ENCODE measurements at regions of chr5 and their contacts with region 1.

Region 1: GRCh38 chr5:132410451-132411381 is 41.2 kb downstream of the SLC22A5 start:
- DNase-seq: peak; percentile 88 to 91 (median 90)
- ATAC-seq: peak; percentile 99
- H3K4me3 ChIP-seq: peak overlapping the region; percentile 60
- H3K27ac ChIP-seq: peak overlapping the region; percentile 81
- H3K4me1 ChIP-seq: peaks cover 17% of the 10 kb centered on the region in 2 experiments; a peak in 4 of 5 replicates
- H3K27me3 ChIP-seq: no peaks in the 10 kb centered on the region
- CTCF ChIP-seq: peak; percentile 81 to 93 (median 85)
- EP300 ChIP-seq: peak; percentile 12; the same call in 1 of the 2 replicates
- POLR2A ChIP-seq: peak; percentile 72
- RAD21 ChIP-seq: peak; percentile 83 to 88

Region 2: DNA sequence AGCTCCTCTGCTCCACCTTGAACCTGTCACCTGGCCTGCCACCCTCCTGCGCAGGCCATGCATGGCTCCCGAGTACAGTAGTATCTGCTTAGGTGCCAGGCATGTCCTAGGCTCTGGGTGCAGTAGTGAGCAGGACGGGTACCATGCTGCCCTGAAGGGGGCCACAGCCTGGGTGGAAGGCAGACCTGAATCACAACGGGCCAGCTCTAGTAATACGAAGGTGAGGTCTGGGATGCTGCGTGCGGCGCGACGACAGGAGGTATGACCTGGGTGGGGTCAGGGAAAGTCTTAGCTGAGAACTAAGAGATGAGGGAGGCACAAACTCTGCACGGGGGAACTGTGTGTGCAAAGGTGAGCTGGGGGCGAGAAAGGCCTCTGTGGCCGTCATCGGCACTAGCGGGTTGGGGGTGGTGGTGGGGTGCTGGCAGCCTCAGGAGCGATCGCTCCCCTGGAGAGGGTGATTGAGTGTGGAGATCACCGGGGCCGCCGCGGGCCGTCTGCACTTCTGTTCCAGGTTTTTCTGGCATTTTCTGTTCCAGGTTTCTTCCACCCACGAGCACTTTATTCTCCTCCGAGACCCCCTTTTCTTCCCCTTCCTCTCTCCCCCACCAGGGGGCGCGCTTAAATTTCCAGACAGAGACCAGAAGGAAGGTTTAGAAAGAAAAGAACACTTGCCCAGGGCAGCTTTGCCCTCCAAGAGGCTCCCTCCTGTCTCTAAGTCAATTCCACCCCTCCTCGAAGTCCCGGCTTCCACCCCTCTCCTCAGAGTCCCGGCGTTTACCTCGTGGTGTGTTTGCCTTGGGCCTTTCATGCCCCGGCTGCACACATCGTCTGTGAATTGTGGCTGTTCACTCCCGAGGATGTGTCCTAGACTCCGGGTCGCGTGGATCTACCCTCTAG is 138.2 kb before region 1 on chr5:
- CTCF ChIA-PET with region 1: no interaction called
- POLR2A ChIA-PET with region 1: no interaction called
- in situ Hi-C with region 1: no loop called
- intact Hi-C with region 1: loop called (anchors 1 kb)
- DNase-seq: peak; percentile 59 to 85 (median 65)
- ATAC-seq: peak; percentile 82
- H3K4me3 ChIP-seq: no peak overlapping the region
- H3K27ac ChIP-seq: no peak overlapping the region
- H3K4me1 ChIP-seq: peaks cover 12 to 41% of the 10 kb centered on the region in 2 experiments; a peak in 4 of 5 replicates
- H3K27me3 ChIP-seq: no peaks in the 10 kb centered on the region
- CTCF ChIP-seq: peak; percentile 82 to 89 (median 84)
- EP300 ChIP-seq: no peak
- POLR2A ChIP-seq: no peak
- RAD21 ChIP-seq: peak; percentile 62 to 89

Region 3: DNA sequence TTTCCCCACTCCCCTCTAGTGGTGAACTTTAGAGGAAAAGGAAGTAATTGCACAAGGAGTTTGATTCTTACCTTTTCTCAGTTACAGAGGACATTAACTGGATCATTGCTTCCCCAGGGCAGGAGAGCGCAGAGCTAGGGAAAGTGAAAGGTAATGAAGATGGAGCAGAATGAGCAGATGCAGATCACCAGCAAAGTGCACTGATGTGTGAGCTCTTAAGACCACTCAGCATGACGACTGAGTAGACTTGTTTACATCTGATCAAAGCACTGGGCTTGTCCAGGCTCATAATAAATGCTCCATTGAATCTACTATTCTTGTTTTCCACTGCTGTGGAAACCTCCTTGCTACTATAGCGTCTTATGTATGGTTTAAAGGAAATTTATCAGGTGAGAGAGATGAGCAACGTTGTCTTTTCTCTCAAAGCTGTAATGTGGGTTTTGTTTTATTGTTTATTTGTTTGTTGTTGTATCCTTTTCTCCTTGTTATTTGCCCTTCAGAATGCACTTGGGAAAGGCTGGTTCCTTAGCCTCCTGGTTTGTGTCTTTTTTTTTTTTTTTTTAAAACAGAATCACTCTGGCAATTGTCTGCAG is 16.0 kb before region 1 on chr5:
- CTCF ChIA-PET with region 1: no interaction called
- POLR2A ChIA-PET with region 1: interaction called, 11 read pairs
- in situ Hi-C with region 1: no loop called
- intact Hi-C with region 1: no loop called
- DNase-seq: no peak
- ATAC-seq: no peak
- H3K4me3 ChIP-seq: no peak overlapping the region
- H3K27ac ChIP-seq: no peak overlapping the region
- H3K4me1 ChIP-seq: no peaks in the 10 kb centered on the region; a peak in 1 of 5 replicates
- H3K27me3 ChIP-seq: no peaks in the 10 kb centered on the region
- CTCF ChIP-seq: no peak
- EP300 ChIP-seq: no peak
- POLR2A ChIP-seq: no peak
- RAD21 ChIP-seq: no peak

Region 4: GRCh38 chr5:133316427-133316826 is 905.7 kb after region 1 on chr5:
- CTCF ChIA-PET with region 1: no interaction called
- POLR2A ChIA-PET with region 1: no interaction called
- in situ Hi-C with region 1: no loop called
- intact Hi-C with region 1: no loop called
- DNase-seq: peak in 3 of 4 experiments; percentile 11 to 51 (median 30)
- ATAC-seq: peak; percentile 86
- H3K4me3 ChIP-seq: no peak overlapping the region
- H3K27ac ChIP-seq: no peak overlapping the region
- H3K4me1 ChIP-seq: no peaks in the 10 kb centered on the region
- H3K27me3 ChIP-seq: peaks cover 3 to 43% of the 10 kb centered on the region in 2 experiments; a peak in 4 of 5 replicates
- CTCF ChIP-seq: peak; percentile 69 to 86 (median 83)
- EP300 ChIP-seq: no peak
- POLR2A ChIP-seq: no peak
- RAD21 ChIP-seq: peak in 1 of 2 experiments; percentile 49; a peak in 3 of 4 replicates